ENCODE measurements at regions of chr11 and their contacts with region 1.

Region 1: GRCh38 chr11:118901494-118902335 is 18.0 kb downstream of the CXCR5 start:
- DNase-seq: peak in 5 of 6 donors; percentile 16 to 72 (median 30)
- ATAC-seq: peak in 2 of 4 donors; percentile 5 to 10
- H3K4me3 ChIP-seq: no peak overlapping the region
- H3K27ac ChIP-seq: no peak overlapping the region
- H3K4me1 ChIP-seq: no peaks in the 10 kb centered on the region
- H3K27me3 ChIP-seq: no peaks in the 10 kb centered on the region
- CTCF ChIP-seq: no peak

Region 2: DNA sequence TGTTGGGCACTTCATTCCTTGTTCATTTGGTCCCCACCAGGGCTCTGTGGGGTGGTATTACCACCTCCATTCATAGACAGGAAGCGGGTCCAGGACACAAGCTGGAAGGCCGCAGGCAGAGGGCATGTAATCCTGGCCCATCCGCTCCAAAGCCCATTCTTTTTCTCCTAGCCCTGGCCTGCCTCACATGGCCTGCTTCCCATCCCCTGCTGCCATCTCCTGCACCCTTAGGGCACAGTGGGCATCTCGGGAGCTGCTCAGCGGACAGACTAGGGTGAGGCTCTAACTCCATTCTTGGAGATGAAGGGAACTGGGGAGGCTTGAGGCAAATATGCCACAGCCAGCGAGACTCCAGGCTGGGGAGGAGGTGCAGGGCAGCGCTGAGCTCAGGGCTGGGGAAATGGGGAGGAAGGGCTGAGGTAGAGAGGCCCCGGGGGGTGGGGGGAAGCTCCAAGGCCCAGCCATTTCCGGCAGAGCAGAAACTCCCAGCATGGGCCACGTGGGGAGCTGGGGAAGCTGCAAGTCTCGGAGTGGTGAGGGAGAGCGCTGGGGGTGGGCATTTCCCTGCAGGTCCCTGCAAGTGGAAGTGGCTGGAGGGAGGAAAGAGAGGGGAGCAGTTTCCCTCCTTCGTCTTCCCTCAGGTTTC is 38.4 kb after region 1 on chr11:
- intact Hi-C with region 1: loop called in 1 of 3 experiments (anchors 5 kb)
- DNase-seq: no peak
- ATAC-seq: peak in 2 of 4 donors; percentile 54 to 60
- H3K4me3 ChIP-seq: no peak overlapping the region
- H3K27ac ChIP-seq: no peak overlapping the region
- H3K4me1 ChIP-seq: no peaks in the 10 kb centered on the region
- H3K27me3 ChIP-seq: no peaks in the 10 kb centered on the region
- CTCF ChIP-seq: no peak

Region 3: GRCh38 chr11:119236490-119236889 is 334.8 kb after region 1 on chr11:
- intact Hi-C with region 1: no loop called
- DNase-seq: no peak
- ATAC-seq: no peak
- H3K4me3 ChIP-seq: no peak overlapping the region
- H3K27ac ChIP-seq: no peak overlapping the region
- H3K4me1 ChIP-seq: no peaks in the 10 kb centered on the region
- H3K27me3 ChIP-seq: no peaks in the 10 kb centered on the region
- CTCF ChIP-seq: no peak

Measured in pancreas (tissue), 10 donors.